ENCODE measurements at regions of chr2 and their contacts with region 1.

Region 1: DNA sequence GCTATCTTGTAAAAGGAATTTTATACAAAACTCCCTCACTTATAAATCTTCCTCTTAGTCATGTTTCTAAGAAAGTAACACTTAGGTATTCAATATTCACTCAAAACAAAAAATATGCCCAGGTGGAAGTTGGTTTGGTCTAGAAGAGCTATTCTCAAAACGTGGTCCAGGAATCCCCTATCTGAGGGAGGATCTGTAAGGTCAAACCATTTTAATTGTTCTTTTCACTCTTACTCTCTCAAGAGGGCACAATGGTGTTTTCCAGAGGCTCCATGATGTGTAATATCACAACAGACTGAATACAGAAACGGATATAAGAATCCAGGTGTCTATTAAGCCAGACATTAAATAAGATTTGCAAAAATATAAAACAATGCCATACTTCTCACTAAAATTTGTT is 9.9 kb downstream of the MOB1A start:
- DNase-seq: no peak
- ATAC-seq: peak; percentile 74
- H3K4me3 Mint-ChIP-seq: no peak overlapping the region
- H3K27ac Mint-ChIP-seq: peak overlapping the region; percentile 59
- H3K4me1 Mint-ChIP-seq: peaks cover 21% of the 10 kb centered on the region
- H3K27me3 Mint-ChIP-seq: no peaks in the 10 kb centered on the region

Region 2: DNA sequence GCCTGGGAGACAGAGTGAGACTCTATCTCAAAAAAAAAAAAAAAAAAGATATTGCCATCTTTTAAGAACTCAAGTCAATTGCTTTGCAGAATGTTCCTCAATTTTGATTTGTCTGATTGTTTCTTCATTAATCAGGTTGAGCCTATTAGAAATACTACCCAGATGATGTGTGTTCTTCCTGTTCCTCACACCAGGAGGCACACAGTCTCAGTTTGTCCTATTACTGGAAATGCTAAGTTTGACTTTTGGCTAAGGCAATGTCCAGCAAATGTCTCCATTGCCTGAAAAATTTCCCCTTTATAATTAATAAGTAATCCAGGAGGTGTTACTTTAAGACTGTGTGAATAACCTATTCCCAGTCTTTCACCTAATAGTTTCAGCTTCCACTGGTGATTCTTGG is 49.4 kb before region 1 on chr2:
- CTCF ChIA-PET with region 1: no interaction called
- POLR2A ChIA-PET with region 1: no interaction called
- intact Hi-C with region 1: no loop called
- DNase-seq: no peak
- ATAC-seq: no peak
- H3K4me3 Mint-ChIP-seq: no peak overlapping the region
- H3K27ac Mint-ChIP-seq: no peak overlapping the region
- H3K4me1 Mint-ChIP-seq: peaks cover 7% of the 10 kb centered on the region
- H3K27me3 Mint-ChIP-seq: peaks cover 3% of the 10 kb centered on the region

Region 3: DNA sequence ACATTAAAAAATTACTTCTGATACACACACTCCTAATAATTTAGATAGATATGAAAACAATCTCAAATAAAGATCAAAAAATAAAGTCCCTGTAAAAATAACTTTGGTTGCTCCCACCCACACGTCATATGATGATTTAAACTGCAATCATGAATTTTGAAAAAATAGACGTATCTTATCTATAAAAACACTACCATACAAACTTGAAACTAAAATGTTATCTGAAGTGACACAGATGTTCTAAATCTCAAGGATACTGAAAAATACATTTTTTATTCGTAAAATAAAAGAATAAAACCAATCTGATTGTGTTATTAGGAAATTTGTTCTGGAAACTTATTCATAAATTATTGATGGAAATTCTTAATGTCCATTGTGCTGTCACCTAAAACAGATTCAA is 12.9 kb before region 1 on chr2:
- CTCF ChIA-PET with region 1: interaction called, 12 read pairs
- POLR2A ChIA-PET with region 1: no interaction called
- intact Hi-C with region 1: loop called in 1 of 2 experiments (anchors 2 kb)
- DNase-seq: no peak
- ATAC-seq: no peak
- H3K4me3 Mint-ChIP-seq: no peak overlapping the region
- H3K27ac Mint-ChIP-seq: no peak overlapping the region
- H3K4me1 Mint-ChIP-seq: no peaks in the 10 kb centered on the region
- H3K27me3 Mint-ChIP-seq: no peaks in the 10 kb centered on the region

Measured in activated CD4-positive, alpha-beta T cell treated with anti-CD3 and anti-CD28 coated beads for 36 hours (primary cell).